Endothelial cell of umbilical vein (primary cell): ENCODE measurements at regions of chr6 and their contacts with region 1.

Region 1: GRCh38 chr6:6008648-6009421 is 2.1 kb upstream of the NRN1 start:
- DNase-seq: peak; percentile 86
- H3K4me3 ChIP-seq: peak overlapping the region; percentile 21 to 86 (median 43)
- H3K27ac ChIP-seq: no peak overlapping the region
- H3K4me1 ChIP-seq: peaks cover 21% of the 10 kb centered on the region
- H3K27me3 ChIP-seq: peaks cover 34 to 57% of the 10 kb centered on the region in 2 experiments
- CTCF ChIP-seq: no peak
- POLR2A ChIP-seq: no peak

Region 2: DNA sequence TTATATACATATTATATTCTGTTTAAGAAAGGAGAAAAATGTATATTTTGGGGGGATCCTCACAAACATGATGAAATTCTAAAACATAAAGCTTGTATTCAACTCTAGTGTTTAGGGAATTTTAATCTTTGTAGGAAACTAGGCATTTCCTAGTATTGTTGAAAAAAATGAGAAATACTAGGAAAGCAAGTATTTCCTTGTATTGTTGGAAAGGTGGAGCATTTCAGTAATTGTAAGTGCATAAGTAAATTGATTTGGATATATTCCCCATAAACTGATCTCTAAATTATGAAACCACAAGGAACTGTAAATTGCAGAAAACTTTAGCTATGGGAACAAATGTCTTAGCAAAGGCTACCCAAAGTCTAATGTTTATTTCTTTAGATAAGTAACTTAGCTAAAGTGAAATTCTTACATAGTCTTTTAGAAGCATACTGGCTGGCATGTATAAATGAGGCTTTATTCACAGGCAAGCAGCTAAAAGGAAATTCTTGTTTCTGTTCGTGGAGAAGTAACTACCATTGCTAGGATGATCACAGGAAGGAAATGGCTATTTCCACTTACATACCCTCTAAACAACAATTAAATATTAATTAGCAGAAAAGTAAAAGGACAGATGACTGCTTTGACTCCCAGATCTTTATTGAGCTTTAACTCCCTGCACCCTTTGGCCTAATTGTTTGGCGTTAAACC is 17.8 kb after region 1 on chr6:
- CTCF ChIA-PET with region 1: interaction called, 3 read pairs
- POLR2A ChIA-PET with region 1: no interaction called
- dilution Hi-C with region 1: no loop called
- intact Hi-C with region 1: loop called (anchors 1 kb)
- DNase-seq: peak; percentile 58
- H3K4me3 ChIP-seq: no peak overlapping the region
- H3K27ac ChIP-seq: peak overlapping the region; percentile 29
- H3K4me1 ChIP-seq: peaks cover 15% of the 10 kb centered on the region
- H3K27me3 ChIP-seq: no peaks in the 10 kb centered on the region
- CTCF ChIP-seq: no peak
- POLR2A ChIP-seq: no peak